Right cardiac atrium (tissue), 5 donors: ENCODE measurements at regions of chr14 and their contacts with region 1.

Region 1: DNA sequence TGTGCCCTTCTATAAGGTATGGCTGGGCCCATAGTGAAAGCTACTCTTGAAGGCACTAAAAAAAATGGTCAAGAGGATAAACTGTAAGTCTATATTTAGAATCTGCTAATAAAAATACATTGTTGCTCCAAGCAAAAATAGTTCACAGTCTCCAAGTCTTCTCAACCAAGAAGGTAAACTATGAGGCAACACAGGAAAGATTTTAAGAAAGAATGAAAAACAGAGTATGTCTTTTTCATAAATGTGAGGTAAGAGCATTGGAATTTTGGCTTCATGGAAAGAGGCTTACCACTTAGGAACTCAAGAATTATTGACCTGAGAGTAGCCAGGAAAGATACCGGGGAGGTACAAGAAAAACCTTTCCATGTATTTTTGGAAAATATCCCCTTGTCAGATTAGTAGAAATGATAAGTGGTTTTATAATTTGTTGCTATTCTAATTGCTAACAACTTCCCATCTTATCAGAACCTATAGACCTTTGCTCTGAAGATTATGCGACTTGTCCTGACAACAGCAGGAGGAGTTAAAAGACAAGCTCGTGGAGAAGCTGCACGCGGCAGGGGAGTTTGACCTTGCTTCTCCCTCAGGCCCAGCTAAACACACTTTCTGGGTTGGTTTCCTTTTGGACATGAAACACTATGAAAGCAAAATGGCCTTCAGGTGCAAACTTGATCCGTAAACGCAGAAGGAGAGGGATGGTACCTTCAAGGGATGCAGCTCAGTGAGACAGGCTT is 238.1 kb downstream of the FOXN3 start:
- DNase-seq: no peak
- ATAC-seq: no peak
- H3K4me3 ChIP-seq: no peak overlapping the region
- H3K27ac ChIP-seq: peak overlapping the region; percentile 23
- H3K4me1 ChIP-seq: peaks cover 7% of the 10 kb centered on the region
- H3K27me3 ChIP-seq: no peaks in the 10 kb centered on the region

Region 2: GRCh38 chr14:89384023-89384422 is 205.1 kb after region 1 on chr14:
- intact Hi-C with region 1: loop called in 1 of 4 experiments (anchors 10 kb)
- DNase-seq: peak in 1 of 3 donors; percentile 50
- ATAC-seq: no peak
- H3K4me3 ChIP-seq: no peak overlapping the region
- H3K27ac ChIP-seq: no peak overlapping the region
- H3K4me1 ChIP-seq: peaks cover 7% of the 10 kb centered on the region
- H3K27me3 ChIP-seq: no peaks in the 10 kb centered on the region

Region 3: DNA sequence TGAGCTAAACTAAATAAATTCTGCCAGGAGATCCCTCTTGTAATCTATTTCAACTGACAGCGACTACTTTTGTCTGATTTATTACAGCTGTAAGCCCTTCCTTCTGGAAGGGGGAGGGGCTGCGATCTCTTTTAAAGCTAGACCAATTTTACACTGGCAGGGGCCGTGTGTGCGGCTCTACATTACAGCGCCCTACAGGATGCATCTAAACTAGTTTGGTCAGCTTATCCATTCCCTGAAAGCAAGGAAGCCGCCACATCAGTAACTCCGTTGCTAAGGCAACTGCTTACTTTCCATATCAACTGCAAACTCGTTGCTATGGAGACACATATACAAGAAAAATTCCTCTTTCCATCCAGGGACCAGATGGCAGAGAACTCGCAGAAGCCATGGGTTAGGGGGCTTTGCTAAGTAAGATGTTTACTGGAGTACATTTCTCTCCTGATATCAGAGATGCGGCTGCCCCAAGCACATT is 220.7 kb after region 1 on chr14:
- intact Hi-C with region 1: loop called in 1 of 4 experiments (anchors 10 kb)
- DNase-seq: peak in 1 of 3 donors; percentile 44
- ATAC-seq: peak; percentile 55 to 67
- H3K4me3 ChIP-seq: no peak overlapping the region
- H3K27ac ChIP-seq: no peak overlapping the region
- H3K4me1 ChIP-seq: peaks cover 13% of the 10 kb centered on the region
- H3K27me3 ChIP-seq: no peaks in the 10 kb centered on the region

Region 4: GRCh38 chr14:91060351-91061055 is 1881.5 kb after region 1 on chr14 and contains the start of gene RPS6KA5:
- intact Hi-C with region 1: no loop called
- DNase-seq: peak; percentile 100
- ATAC-seq: peak; percentile 98
- H3K4me3 ChIP-seq: peak within 1 kb of the TSS; percentile 83
- H3K27ac ChIP-seq: peak within 1 kb of the TSS; percentile 91
- H3K4me1 ChIP-seq: no peaks in the 10 kb centered on the region
- H3K27me3 ChIP-seq: no peaks in the 10 kb centered on the region
- total RNA-seq, gene RPS6KA5: 9.9 to 15.5 (median 13.2) TPM